HEK293 (cell line): ENCODE measurements at regions of chr16 and their contacts with region 1.

Region 1: GRCh38 chr16:4214215-4214621 is 27.7 kb downstream of the SRL start:
- H3K4me3 ChIP-seq: no peak overlapping the region
- H3K27ac ChIP-seq: no peak overlapping the region
- H3K4me1 ChIP-seq: peaks cover 4% of the 10 kb centered on the region; the same call in 1 of the 2 replicates
- CTCF ChIP-seq: no peak

Region 2: DNA sequence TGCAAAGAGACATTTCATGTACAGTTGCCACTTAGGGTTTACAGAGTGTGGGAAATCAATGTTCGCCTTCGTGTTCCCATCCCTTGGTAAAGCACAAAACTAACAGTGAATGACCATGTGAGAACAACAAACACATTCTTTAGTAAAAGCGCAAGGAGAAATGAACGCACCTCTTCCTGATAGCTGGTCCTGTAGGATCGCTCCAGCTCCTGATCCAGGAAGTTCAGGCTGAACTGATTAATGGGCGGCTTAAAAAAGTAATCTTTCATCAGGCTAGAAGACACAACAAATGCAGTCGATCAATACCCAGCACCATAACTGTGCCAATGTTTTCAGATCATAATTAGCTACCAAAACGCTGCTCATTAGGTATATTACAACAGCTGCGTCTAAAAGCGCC is 225.4 kb before region 1 on chr16:
- CTCF ChIA-PET with region 1: no interaction called
- POLR2A ChIA-PET with region 1: no interaction called
- H3K4me3 ChIP-seq: no peak overlapping the region
- H3K27ac ChIP-seq: no peak overlapping the region
- H3K4me1 ChIP-seq: no peaks in the 10 kb centered on the region
- CTCF ChIP-seq: no peak

Region 3: DNA sequence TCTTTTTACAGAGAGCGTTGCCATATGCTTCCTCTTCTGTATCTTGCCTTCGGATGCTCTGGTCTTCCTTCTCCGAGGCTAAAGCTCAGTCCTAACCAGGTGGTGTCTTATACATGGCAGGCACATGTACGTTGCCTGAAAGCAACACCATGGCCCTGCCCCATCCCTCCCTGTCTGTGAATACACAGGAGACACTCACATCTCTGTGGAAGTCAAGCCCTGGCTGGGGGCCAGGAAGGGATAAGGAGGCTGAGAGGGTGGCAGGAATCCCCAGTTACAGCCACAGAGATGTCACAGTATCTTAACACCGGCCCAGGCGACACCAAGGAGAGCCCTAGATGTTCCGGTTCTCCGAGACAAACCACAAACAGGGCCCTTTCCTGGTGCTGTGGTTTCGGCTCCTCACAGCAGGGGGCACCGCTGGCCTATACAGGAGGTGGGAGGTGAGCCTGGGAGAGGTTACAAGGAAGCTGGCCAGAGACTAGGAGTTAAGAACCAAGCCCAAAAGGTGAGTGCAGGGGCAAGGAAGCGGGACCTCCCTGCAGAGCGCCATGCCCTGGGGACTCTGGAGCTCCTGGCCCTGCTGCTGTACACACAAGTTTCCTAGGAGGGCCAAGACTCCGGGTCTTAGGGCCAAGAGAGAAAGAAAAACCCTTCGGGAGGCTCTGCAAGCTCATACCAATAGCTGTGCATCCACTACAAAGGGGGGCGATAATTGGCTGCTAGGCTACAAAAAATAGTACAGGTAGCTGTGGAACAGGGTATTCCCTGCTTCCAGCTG is 14.0 kb before region 1 on chr16:
- CTCF ChIA-PET with region 1: interaction called, 12 read pairs
- POLR2A ChIA-PET with region 1: interaction called, 3 read pairs
- H3K4me3 ChIP-seq: no peak overlapping the region
- H3K27ac ChIP-seq: no peak overlapping the region
- H3K4me1 ChIP-seq: no peaks in the 10 kb centered on the region
- CTCF ChIP-seq: peak; percentile 80

Region 4: DNA sequence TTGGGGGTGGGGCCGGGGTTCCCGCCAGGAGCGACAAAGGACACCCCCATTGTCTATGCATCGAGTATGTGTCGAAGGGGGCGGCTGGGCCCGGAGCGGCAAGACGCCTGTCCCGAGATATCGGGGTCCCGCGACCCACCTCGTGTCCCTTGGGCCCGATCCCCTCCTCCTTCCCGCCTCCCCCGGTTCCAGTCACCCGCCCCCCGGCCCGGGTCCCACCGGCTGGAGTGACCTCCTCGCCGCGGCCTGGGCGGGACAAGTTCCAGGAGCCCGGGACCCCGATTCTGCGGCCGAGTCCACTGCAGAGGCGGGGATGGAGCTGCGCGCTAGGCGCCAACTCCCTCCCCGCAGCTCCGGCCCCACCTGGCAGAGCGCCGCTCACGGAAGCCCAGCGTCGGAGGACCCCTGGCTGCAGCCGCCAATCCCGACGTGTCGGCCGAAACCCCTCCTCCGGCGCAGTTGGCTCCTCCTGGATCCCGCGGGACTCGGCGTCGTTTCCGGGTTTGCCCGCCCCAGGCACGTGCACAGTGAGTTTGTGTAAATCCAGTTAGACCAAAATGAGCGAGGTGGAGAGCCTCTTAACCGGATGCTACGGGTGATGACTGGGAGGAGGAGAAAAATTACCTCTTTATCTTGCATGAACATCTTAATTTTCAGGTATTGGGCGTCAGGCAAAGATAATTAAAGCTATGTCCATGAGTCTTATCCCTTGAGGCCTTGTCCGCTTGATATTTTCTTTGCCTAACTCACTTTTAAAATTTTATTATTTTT is 260.2 kb after region 1 on chr16 and contains the start of gene NMRAL1:
- CTCF ChIA-PET with region 1: no interaction called
- POLR2A ChIA-PET with region 1: no interaction called
- H3K4me3 ChIP-seq: peak within 1 kb of the TSS; percentile 28
- H3K27ac ChIP-seq: no peak within 1 kb of the TSS
- H3K4me1 ChIP-seq: 0 out of 2 replicates have a peak, but pooled peaks cover 2% of the 10 kb centered on the region
- CTCF ChIP-seq: no peak